Sigmoid colon (tissue), 7 donors: ENCODE measurements at regions of chr5 and their contacts with region 1.

Region 1: DNA sequence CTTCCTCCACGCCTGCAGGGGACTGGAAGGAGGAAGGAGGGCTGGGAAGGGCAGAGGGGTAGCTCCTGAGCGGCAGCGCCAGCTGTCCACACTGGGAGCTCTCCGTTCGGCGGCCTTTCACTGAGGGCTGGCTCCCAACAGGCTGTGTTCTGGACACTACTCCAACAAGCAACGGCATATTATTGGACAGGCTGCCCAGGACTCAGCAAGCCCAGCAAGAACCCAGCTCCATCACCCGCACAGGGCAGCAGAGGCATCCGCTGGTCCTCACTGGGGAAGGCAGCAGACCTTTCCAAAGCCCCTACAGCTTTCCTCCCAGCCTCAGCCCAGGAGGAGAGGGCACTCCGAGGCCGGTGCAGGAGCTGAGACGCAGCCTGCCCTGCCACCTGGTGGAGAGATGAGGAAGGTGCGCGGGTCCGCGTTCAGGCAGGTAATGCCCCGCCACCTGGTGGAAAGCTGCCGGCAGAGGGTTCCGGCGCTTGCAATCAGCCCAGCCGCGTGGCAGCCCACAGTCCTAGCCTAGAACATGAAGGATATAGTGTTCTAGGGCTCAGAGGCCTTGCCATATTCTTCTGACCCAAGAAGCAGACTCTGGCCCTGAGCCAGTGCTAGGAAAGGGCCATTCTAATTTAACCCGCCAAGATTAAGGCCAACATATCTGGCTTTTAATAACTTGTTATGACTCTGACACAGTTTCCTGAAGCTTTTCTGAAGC is 74.4 kb downstream of the NRG2 start:
- DNase-seq: peak; percentile 91
- H3K4me3 ChIP-seq: no peak overlapping the region
- H3K27ac ChIP-seq: no peak overlapping the region
- H3K4me1 ChIP-seq: peaks cover 0 to 16% (median 10%) of the 10 kb centered on the region in 4 donors
- H3K27me3 ChIP-seq: no peaks in the 10 kb centered on the region
- CTCF ChIP-seq: peak; percentile 98 to 99 (median 98)
- EP300 ChIP-seq: no peak
- POLR2A ChIP-seq: no peak

Region 2: GRCh38 chr5:139787568-139788293 is 181.0 kb before region 1 on chr5:
- intact Hi-C with region 1: loop called (anchors 1 kb)
- DNase-seq: peak; percentile 92
- H3K4me3 ChIP-seq: peak overlapping the region; percentile 42 to 64 (median 56)
- H3K27ac ChIP-seq: peak overlapping the region; percentile 67 to 76 (median 70)
- H3K4me1 ChIP-seq: peaks cover 0 to 13% (median 10%) of the 10 kb centered on the region in 4 donors
- H3K27me3 ChIP-seq: no peaks in the 10 kb centered on the region
- CTCF ChIP-seq: peak; percentile 80 to 98 (median 90)
- EP300 ChIP-seq: no peak
- POLR2A ChIP-seq: no peak

Region 3: GRCh38 chr5:139844472-139845145 is 124.1 kb before region 1 on chr5:
- intact Hi-C with region 1: loop called (anchors 1 kb)
- DNase-seq: peak; percentile 86
- H3K4me3 ChIP-seq: no peak overlapping the region
- H3K27ac ChIP-seq: no peak overlapping the region
- H3K4me1 ChIP-seq: peaks cover 0 to 21% (median 11%) of the 10 kb centered on the region in 4 donors
- H3K27me3 ChIP-seq: peaks cover 0 to 9% (median 0%) of the 10 kb centered on the region in 3 donors
- CTCF ChIP-seq: peak; percentile 33 to 58 (median 46)
- EP300 ChIP-seq: no peak
- POLR2A ChIP-seq: no peak

Region 4: GRCh38 chr5:139863855-139864558 is 104.7 kb before region 1 on chr5:
- intact Hi-C with region 1: loop called (anchors 2 kb)
- DNase-seq: peak; percentile 83
- H3K4me3 ChIP-seq: no peak overlapping the region
- H3K27ac ChIP-seq: peak overlapping the region in 2 of 4 donors; percentile 53 to 54
- H3K4me1 ChIP-seq: peaks cover 0 to 17% (median 15%) of the 10 kb centered on the region in 4 donors
- H3K27me3 ChIP-seq: no peaks in the 10 kb centered on the region
- CTCF ChIP-seq: peak; percentile 57 to 86 (median 76)
- EP300 ChIP-seq: no peak
- POLR2A ChIP-seq: no peak

Region 5: GRCh38 chr5:140042643-140043500 is 74.2 kb after region 1 on chr5 and contains the start of gene NRG2:
- intact Hi-C with region 1: loop called (anchors 2 kb)
- DNase-seq: peak; percentile 90
- H3K4me3 ChIP-seq: peak within 1 kb of the TSS; percentile 61 to 75 (median 70)
- H3K27ac ChIP-seq: peak within 1 kb of the TSS; percentile 79 to 88 (median 82)
- H3K4me1 ChIP-seq: peaks cover 0 to 46% (median 25%) of the 10 kb centered on the region in 4 donors
- H3K27me3 ChIP-seq: no peaks in the 10 kb centered on the region
- CTCF ChIP-seq: peak; percentile 51 to 76 (median 69)
- EP300 ChIP-seq: no peak
- POLR2A ChIP-seq: no peak
- total RNA-seq, gene NRG2: 3.4 to 11.9 (median 5.6) TPM

Region 6: DNA sequence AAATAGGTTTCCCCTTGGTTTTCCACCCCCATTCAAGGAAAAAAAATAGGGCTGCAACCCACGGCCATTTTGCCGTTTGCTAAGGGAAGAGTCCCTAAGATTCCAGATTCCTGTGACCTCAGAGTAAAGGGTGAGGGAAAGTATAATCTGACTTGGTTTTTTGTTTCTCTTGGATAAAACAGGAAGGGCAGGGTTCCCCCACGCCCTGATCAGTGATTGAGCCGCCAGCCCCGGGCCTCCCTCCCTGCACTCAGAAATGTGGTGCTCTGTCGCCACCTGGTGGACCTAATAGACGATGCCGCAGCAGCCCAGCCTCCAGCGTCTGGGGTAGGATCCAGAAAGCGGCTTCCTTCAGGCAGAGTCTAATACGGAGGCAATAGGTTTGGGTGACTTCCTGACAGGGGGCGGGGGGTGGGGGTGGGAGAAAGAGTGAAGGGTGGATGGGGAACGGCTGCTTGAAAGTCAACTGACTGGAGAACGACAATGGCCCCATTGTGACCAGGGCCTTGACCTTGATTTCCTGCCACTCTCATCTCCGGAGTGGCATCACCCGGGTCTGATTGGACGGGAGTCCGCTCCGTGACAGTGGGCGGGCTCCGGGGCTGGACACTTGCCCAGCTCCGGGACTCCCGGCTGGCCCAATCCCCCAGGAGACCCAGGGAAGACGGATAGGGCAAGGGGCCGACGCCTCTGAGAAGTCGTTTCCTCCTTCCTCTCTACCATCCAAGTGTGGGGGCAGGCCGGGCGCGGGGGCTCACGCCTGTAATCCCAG is 188.5 kb after region 1 on chr5:
- intact Hi-C with region 1: loop called (anchors 5 kb)
- DNase-seq: peak; percentile 93
- H3K4me3 ChIP-seq: peak overlapping the region; percentile 10 to 42 (median 35)
- H3K27ac ChIP-seq: peak overlapping the region; percentile 7 to 61 (median 27)
- H3K4me1 ChIP-seq: peaks cover 0 to 16% (median 7%) of the 10 kb centered on the region in 4 donors
- H3K27me3 ChIP-seq: no peaks in the 10 kb centered on the region
- CTCF ChIP-seq: peak; percentile 75 to 95 (median 90)
- EP300 ChIP-seq: no peak
- POLR2A ChIP-seq: no peak